ENCODE measurements at regions of chr12 and their contacts with region 1.

Region 1: DNA sequence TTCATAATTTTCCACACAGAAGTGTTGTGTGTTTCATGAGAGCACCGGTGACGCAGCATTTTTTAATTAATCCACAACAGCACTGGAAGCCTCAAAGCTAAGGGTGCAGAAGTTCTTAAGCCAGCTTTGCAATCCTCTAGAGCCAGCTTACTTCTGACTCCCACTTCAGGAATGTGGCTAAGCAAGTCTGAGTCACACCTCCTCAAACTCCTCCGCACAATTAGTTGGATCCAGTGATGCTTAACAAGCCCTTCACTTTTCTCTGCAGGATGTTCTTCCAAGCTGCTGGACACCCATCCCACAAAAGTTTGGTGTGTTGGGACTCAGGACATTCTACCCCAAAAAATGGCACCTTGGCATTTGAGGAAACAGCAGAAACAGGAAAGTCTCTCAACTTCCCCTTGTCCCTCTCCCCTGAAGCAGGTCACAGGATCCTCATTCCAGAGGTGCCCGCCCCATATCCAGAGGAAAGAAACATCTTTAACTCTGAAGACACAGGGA is 210.0 kb downstream of the PPM1H start:
- DNase-seq: peak; percentile 92
- H3K4me3 ChIP-seq: no peak overlapping the region
- H3K27ac ChIP-seq: peak overlapping the region; percentile 93
- H3K4me1 ChIP-seq: peaks cover 23% of the 10 kb centered on the region
- H3K27me3 ChIP-seq: no peaks in the 10 kb centered on the region
- CTCF ChIP-seq: no peak
- POLR2A ChIP-seq: no peak

Region 2: DNA sequence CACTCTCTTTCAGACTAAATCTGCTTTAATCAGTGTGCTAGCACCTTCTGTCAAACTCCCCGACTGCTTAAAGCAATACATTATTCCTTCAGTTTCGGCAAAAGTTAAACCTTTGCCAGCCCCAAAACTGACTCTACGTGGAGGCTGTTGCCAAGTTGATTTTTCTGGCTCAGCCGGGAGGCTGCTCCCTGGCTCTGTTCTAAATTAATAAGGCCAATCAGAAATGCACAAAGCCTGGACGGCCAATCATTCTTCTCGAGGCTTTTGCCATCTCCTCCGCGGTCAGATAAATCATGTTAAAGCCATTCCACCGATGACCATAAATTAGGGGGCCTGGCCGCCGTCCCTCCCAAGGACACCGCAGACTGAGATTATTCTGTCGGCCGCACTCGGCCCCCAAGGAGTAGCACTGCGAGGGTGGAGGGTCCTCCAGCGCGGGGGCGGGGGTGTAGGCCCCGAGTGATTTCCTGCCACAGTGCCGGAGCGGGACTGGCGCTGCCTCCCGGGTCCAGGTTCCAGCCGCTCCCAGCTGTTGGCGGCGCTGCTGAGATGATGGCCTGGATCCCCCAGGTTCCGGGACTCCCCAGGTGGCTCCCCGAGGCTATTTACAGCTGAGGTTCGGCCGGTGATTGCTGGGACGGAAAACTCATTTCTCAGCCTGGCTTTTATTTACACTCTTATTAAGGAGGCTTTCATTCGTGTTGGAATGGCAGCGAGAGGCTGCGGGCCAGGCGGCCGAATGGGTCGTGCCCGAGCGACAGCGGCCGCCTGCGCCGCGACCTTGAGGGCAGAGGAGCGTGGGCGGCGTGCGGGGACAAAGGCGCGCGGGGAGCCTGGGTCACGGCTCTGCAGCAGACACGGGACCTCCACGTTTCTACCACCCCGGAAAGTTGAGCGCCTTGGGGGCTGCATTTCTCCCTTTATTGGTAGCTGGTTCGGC is 93.3 kb before region 1 on chr12:
- CTCF ChIA-PET with region 1: no interaction called
- POLR2A ChIA-PET with region 1: no interaction called
- dilution Hi-C with region 1: no loop called
- intact Hi-C with region 1: loop called (anchors 5 kb)
- DNase-seq: peak; percentile 68
- H3K4me3 ChIP-seq: peak overlapping the region; percentile 47 to 79 (median 63)
- H3K27ac ChIP-seq: peak overlapping the region; percentile 1
- H3K4me1 ChIP-seq: peaks cover 17% of the 10 kb centered on the region
- H3K27me3 ChIP-seq: no peaks in the 10 kb centered on the region
- CTCF ChIP-seq: peak; percentile 29 to 52
- POLR2A ChIP-seq: no peak

Measured in endothelial cell of umbilical vein (primary cell).